Pancreas (tissue), 10 donors: ENCODE measurements at regions of chr19 and their contacts with region 1.

Region 1: DNA sequence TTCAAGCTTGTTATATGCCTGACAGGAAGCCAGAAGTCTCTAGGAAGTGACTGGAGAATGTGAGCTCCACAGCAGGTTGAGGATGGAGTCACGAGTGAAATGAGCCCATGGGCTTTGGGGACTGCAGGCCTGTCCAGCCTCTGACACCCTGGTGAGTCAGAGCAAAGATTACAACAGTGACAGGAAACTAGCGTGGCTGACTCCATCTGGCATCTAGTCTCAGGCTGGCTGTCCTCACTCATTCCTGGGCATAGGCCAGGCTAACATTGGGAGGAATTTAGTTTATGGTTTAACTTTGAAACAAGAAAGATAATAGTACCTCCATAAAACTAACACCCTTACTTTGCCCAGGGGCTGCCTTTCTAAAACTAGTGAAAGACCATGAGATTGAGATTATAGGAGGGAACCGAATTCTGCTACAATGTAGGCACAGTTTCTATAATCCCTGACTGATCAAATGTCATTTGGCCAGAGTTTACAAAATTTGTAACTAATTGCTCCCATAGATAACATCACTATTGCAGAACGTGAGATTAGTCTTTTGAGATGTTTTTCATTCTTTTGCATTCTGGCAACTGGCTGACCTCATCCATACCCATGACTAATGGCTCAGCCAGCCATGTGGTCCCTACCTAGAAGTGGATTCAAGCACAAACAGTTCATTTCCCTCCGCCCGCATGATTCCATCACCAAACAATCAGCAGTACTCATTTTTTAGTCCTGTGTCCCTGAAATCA is 28.4 kb downstream of the PSG1 start:
- DNase-seq: peak in 1 of 6 donors; percentile 16
- ATAC-seq: peak in 1 of 4 donors; percentile 50
- H3K4me3 ChIP-seq: no peak overlapping the region
- H3K27ac ChIP-seq: peak overlapping the region in 1 of 4 donors; percentile 52
- H3K4me1 ChIP-seq: no peaks in the 10 kb centered on the region
- H3K27me3 ChIP-seq: no peaks in the 10 kb centered on the region
- CTCF ChIP-seq: no peak

Region 2: GRCh38 chr19:42762782-42763181 is 88.4 kb before region 1 on chr19:
- intact Hi-C with region 1: loop called in 1 of 3 experiments (anchors 10 kb)
- DNase-seq: peak in 1 of 6 donors; percentile 5
- ATAC-seq: no peak
- H3K4me3 ChIP-seq: no peak overlapping the region
- H3K27ac ChIP-seq: peak overlapping the region in 2 of 4 donors; percentile 8 to 48
- H3K4me1 ChIP-seq: no peaks in the 10 kb centered on the region
- H3K27me3 ChIP-seq: no peaks in the 10 kb centered on the region
- CTCF ChIP-seq: no peak